ENCODE measurements at regions of chr15 and their contacts with region 1.

Region 1: GRCh38 chr15:101251830-101252820 is at the start of gene CHSY1:
- DNase-seq: peak; percentile 97
- total RNA-seq, gene CHSY1: 17.5 TPM

Region 2: DNA sequence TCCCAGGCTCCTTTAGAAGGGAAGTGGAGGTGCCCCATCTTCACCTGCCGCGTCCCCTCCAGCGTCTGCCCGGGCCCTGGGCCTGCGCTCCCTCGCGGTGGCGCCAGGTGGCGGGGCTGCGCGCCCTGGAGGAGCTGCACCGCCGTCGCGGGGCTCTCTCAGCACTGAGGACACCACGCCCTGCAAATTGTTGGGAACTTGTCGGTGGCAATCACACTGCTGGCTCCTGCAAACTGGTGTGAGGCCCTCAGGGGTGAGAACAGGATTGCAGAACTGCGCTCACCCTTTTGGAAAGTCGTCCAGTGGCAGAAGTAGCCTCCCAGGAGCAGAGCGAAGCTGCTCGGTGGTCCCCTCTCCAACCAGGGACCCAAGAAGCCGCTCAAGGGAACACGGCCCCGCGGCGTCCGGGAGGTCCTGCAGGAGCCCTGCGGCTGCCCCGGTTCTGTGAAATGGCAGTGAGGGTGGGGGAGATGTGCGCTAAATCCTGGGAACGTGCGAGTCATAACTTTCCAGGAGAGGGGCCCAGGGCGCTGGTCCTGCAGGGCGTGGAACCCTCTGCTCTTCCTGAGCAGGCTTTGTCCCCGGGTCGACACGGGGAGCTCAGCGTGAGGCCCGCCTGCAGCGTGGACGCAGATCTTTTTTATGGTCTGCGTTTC is 334.0 kb before region 1 on chr15:
- intact Hi-C with region 1: loop called (anchors 10 kb)
- DNase-seq: peak; percentile 93

Region 3: DNA sequence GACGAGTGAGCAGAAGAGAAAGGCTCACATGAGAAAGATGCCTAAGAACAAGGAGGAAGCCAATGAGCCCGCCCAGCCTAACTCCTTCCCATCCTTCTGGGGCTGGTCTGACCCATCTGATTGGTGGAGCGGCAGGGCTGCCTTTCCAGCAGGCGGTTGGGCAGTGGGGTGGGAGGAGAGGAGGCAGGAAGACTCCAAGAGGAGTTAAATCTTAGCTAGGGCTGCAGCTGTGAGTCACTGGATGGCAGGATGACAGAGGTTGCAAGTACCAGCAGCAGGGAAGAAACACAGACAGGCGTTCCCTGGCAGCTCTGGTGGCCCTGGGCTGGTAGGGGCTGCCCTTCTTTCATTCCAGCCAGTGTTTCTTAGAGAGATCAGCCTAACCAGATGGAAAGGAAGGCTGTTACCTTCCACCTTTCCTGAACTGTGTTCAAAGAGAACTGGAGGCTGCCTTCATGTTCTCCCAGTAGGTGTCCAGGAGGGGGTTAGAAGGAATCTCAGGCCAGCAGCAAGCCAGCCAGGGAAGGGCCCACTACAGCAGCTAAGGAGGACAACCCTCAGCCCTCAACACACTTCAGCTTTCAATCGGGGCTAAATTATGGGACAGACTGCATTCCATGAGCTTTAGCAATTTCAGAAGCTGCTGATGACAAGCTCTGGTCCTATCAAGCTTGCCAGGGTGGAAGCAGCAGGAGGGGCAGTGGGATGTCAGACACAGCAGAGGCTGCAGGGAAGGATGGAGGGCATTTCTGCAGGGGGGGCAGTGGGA is 50.5 kb before region 1 on chr15:
- intact Hi-C with region 1: loop called (anchors 5 kb)
- DNase-seq: peak; percentile 89